ENCODE measurements at regions of chr18 and their contacts with region 1.

Region 1: DNA sequence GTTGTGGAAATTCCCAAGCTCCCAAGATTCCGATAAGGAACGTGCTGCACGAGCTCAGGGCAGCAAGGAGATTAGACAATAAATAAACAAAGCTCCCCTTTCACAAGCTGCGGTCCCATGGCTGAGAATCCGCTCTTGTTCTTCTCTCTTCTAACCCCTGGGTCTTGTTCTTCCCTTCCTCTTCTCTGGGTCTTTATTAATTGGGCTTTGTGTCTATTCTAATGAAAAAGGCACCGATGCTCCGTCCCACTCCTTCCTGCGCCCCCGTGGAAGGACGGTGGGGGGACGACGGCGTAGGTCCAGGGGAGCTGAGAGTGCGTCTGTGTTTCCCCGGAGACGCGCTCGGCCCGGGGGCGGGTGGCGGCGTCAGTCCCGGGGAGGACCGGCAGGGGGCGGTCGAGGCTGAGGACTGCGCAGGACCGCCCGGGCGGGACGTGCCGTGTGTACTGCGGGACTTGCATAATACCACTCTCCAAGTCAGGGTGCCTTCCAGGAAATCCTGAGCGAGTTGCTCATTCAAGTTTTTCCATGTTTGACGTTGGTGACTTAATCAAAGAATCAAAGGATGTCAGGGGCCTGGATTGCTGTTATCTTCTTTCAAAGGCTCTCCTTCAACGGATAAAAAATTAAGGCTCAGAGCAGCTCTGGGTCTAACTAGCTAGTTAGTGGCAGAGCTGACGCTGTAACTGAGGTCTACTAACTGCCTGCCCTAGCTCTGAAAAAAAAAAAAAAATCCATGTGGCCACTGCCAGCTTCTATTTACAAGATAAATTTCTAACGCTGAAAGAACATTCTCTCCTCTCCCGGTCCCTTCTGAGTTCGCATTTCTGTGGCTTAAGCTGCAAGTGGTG is 321.4 kb downstream of the TGIF1 start:
- DNase-seq: peak; percentile 90

Region 2: DNA sequence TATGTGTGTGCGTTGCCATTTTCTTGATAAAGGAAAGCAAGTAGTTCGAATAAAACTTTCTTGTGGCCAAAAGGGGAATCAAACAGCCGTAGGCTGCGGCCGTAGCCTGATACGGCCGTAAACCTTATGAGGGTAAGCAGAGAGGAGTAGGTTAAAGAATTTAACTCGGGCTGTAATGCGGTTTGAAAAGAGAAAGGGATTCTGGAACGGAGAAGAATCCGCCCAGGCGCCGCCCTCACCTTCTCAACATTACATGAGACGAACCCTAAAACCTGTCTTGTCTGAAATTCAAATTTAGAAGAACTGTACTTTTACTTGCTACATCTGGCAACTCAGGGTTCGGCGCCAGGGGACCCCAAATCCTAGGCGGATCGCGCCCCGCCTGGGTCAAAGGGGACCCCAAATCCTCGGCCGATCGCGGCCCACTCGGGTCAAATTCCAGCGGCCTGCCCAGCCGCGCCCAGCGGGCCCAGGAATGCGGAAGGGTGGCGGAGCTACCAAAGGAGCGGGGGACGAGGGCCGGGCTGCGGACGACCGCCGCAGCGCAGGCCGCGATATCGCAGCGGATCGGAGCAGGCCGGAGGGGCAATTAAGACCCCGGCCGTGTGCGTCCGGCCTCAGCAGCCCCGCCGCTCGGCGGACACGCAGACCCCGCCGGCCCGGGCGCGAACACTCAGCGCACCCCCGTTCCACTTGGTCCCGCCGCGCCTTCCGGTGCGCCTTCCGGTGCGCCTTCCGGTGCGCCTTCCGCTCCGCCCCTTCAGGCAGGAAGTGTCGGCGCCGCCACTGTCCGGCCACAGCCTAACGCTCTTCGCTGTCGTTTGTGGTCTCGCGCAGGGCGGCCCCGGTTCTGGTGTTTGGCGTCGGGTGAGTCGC is 509.7 kb before region 1 on chr18 and contains the start of gene MYL12B:
- intact Hi-C with region 1: loop called (anchors 10 kb)
- DNase-seq: peak; percentile 93
- total RNA-seq, gene MYL12B: 228 TPM

Region 3: DNA sequence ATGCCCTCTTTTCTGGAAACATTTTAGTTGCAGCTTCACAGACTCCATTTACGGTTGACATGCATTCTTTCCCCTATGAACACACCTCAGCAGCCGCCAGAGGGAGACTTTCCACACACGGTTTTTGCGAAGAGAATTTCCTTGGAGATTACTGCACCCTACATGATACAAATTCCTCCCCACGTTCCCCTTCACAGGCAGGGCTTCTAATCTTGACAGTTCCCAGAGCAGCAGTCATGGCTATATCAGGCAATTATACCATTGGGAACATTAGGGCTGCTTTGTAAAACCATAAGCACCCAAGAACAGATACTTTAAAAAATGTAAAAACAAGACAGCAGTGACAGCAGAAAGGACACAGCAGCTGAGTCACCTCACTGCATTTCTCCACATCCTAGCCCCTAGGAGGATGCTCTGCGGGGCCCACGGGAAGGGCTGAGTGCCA is 67.6 kb before region 1 on chr18:
- intact Hi-C with region 1: loop called (anchors 5 kb)
- DNase-seq: no peak

Region 4: DNA sequence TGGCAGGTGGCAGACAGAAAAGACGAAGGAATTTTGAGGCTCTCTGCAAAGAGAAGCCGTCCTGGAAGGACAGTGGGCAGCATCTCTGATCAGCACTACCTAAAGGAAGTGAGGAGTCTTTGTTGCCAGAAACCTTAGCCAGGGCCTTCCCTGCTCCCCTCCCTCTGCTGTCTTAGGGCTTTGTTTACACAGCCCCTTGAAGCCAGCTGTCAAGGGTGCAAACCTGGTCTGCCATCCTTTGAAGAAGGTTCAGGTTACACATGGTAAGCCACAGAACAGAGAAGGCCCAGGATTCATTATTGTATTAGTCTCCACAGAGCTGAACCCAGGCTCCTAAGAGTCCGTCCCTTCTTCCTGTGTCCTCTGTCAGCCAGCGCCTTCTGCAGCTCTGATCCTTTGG is 35.3 kb after region 1 on chr18:
- intact Hi-C with region 1: no loop called
- DNase-seq: no peak

Region 5: DNA sequence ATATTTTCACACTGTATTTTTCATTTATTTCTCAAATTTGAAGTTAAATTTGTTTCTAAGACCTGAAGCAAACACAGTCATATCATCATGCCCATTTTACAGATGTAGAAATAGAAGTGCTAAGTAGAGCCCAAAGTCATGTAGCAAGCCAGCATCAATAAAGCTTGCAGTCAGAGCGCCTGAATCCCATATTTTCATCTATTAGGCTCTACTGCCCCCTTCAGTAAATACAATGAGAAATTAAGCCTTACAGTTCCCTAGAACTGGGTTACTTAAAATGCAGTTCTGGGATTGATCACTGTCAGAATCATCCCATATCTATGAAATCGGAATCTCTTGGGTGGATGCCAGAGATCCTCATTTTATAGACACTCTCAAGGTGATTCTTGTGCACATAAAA is 98.5 kb after region 1 on chr18:
- intact Hi-C with region 1: loop called (anchors 5 kb)
- DNase-seq: no peak

Region 6: DNA sequence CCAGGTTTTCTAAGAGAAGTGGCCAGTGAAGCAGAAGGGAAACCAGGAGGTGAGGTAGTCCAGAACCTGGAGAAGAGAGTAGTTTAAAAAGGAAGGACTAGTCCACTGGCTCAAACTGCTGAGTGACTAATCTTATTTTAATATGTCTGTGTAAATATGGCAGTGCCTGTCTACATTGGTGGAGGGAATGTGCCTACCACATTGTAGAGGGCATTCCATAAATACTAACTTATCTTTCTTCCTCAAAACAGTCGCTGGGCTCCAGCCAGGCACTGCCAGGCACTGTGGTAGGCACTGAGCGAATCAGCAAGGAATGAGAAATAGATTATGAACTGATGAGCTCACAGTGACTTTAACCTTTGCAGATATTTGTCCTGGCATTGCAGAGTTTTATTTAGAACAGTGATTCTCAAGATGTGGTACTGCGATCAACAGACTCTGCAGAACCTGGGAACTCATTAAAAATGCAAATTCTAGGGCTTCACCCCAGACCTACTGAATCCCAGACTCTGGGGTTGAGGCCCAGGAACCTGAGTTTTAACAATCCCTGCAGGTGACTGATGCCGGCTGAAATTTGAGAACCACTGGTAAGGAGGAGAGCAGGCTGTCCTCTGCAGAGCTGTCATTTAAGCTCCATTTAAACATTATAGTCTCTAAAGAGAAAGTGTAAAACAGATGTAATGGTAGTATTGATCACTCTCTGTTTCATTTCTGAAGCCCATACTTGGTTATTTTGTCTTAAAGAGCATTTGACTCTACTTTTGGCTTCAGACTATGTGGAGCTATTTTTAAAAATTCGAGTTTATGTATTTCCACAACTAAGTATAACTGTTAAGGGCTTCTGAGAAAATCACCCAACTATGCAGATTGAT is 195.9 kb after region 1 on chr18:
- intact Hi-C with region 1: loop called (anchors 2 kb)
- DNase-seq: peak; percentile 83

Region 7: GRCh38 chr18:3995476-3996102 is 224.2 kb after region 1 on chr18:
- intact Hi-C with region 1: loop called (anchors 1 kb)
- DNase-seq: no peak

Region 8: GRCh38 chr18:4068552-4069158 is 297.3 kb after region 1 on chr18:
- intact Hi-C with region 1: loop called (anchors 5 kb)
- DNase-seq: no peak

Measured in cardiac septum (tissue), 1 donor.